ENCODE measurements at regions of chr7 and their contacts with region 1.

Region 1: DNA sequence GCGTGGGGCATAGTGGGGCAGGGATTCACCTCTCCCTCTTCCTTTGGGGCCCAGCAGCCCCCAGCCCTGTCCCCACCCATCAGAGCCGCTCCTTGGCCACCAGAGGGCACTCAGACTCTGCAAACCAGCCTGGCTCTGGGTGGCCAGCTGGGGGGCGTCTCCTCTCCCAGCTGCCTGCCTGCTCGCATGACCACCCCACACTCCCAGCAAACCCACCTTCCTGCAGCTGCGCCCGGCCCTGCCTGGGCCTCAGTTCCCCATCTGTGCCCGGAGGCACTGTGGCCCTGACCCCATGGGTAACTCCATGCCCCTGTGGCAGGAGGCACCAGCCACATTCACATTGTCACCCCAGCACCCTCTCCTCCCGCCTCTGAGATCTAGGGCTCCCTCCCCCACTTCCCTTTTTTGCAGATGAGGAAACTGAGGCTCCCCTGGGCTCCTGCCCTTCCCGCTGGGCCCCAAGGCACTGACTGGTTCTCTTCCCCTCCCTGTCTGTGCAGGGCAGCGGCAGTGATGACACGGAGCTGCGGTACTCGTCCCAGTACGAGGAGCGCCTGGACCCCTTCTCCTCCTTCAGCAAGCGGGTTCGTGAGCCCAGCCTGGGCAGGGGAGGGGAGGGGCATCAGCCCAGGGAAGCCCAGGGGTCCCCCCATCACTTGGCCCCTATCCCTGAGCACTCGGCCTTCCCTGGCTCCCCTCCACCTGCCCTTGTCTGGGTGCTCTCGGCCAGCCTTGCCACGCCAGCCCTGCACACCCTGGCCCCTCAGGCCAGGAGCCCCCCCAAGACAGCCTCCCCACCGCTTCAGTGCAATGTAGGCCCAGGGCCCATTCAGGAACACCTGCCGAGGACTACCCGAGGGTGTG is 6.9 kb upstream of the SH2B2 start:
- DNase-seq: peak in 1 of 2 experiments; percentile 67
- H3K4me3 ChIP-seq: no peak overlapping the region
- H3K27ac ChIP-seq: no peak overlapping the region
- H3K4me1 ChIP-seq: no peaks in the 10 kb centered on the region
- H3K27me3 ChIP-seq: no peaks in the 10 kb centered on the region
- CTCF ChIP-seq: peak; percentile 78

Region 2: DNA sequence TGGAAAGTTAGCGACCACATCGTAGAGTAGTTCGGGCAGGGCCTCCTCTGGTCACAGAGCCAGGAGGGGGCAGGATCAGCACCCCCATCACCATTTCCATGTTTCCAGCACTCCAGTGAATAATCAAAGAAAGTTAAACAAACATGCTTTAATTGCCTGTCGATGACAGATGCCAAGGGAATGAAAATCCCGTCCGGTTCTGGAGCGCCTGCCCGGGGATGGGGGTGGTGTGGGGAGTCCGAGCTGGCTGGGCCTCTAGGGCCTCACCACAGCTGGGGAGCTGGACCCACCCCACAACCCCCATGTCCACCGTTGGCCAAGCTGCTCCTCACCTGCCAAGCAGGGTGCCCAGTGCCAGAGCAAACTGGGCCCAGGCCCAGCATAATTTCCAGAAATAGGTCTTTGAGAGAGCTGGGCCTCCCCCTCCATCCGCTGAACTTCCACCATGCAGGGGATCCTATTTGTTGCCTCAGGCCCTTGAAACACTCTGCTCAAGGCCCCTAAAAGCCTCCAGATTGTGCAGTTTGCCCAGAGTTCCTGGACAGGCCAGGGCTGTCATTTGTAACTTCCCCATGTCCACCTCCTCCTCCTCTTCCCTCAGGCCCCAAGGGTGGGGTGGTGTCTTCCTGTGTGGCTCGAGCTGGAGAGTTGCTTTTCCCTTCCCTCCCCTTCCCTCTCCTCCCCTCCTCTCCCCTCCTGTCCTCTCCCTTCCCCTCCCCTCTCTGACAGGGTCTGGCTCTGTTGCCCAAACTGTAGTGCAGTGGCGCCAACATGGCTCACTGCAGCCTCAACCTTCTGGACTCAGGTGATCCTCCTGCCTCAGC is 751.7 kb before region 1 on chr7:
- CTCF ChIA-PET with region 1: no interaction called
- POLR2A ChIA-PET with region 1: no interaction called
- intact Hi-C with region 1: no loop called
- DNase-seq: no peak
- H3K4me3 ChIP-seq: no peak overlapping the region
- H3K27ac ChIP-seq: no peak overlapping the region
- H3K4me1 ChIP-seq: no peaks in the 10 kb centered on the region
- H3K27me3 ChIP-seq: peaks cover 32% of the 10 kb centered on the region
- CTCF ChIP-seq: no peak

Region 3: DNA sequence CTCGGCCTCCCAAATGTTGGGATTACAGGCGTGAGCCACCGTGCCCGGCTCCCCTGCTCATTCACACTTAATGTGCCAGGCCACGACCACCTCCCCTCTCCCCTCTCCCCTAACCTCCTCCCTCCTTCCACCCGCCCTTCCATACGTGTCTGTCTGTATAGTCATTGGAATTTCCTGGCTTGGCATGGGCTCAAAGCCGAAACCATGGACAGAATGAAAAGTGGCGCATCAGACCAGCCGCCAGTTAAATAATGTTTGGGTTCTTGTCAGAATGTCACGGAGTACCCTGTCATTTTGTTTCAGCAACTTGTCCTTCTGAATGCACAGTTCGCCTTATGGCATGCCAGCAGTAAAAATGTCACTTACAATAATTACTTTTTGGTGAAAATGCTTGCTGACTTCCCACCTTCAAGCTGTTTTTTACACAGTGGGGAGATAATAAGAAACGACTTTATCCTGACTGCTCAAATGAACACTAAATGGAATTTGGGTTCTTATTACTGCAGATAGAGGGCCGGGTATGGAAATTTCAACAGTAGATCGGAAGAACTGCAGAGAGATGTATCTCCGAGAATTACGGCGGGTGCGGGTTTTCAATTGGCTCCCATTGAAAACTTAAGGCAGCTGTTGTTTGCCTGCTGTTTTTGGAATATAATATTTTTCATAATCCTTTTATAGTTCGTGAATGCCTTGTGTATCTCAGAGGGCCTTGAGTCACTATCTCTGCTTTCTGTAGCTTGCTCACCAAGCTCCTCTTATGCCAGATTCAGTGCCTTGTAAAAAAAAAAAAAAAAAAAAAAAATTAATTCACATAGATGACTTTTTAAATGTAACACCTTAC is 58.6 kb before region 1 on chr7:
- CTCF ChIA-PET with region 1: no interaction called
- POLR2A ChIA-PET with region 1: interaction called, 10 read pairs
- intact Hi-C with region 1: no loop called
- DNase-seq: no peak
- H3K4me3 ChIP-seq: no peak overlapping the region
- H3K27ac ChIP-seq: no peak overlapping the region
- H3K4me1 ChIP-seq: no peaks in the 10 kb centered on the region
- H3K27me3 ChIP-seq: no peaks in the 10 kb centered on the region
- CTCF ChIP-seq: no peak

Region 4: GRCh38 chr7:102464577-102465280 is 185.0 kb after region 1 on chr7 and contains the starts of genes ALKBH4 and LRWD1:
- CTCF ChIA-PET with region 1: interaction called, 7 read pairs
- POLR2A ChIA-PET with region 1: no interaction called
- intact Hi-C with region 1: loop called (anchors 10 kb)
- DNase-seq: peak; percentile 69 to 95
- H3K4me3 ChIP-seq: peak within 1 kb of the TSS; percentile 99
- H3K27ac ChIP-seq: no peak within 1 kb of the TSS
- H3K4me1 ChIP-seq: peaks cover 12% of the 10 kb centered on the region
- H3K27me3 ChIP-seq: no peaks in the 10 kb centered on the region
- CTCF ChIP-seq: no peak
- total RNA-seq, gene ALKBH4: 10.9 and 18.1 TPM in 2 replicates
- total RNA-seq, gene LRWD1: 35.3 and 57.9 TPM in 2 replicates